Calu3 (cell line): ENCODE measurements at regions of chr14 and their contacts with region 1.

Region 1: DNA sequence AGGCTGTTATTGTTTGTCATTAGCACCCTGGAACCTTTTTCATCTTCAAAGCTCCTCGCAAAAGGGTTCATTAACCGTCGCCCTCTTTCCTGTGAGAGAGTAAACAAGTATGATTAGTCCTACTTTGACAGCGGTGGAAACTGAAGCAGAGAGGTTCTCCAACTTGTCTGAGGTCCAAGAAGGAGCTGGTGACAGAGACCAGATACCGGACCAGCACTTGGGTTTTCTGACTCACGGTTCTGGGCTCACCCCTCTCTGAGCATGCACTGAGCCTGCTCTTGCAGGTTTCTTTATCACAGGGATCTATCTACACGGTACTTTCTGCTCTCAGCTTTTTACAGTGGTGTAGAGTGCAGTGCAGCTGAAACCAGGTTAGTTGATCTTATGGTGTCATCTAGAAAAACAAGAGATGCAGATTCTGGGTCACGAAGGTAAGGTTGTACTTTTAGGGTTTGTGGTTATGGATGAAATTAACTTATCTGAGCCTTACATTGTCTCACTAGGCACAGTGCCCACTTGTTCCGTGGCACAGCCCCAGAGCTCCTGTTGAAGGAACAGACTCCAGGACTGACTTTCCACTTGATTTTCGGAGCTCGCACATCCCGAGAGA is 62.1 kb downstream of the PPP2R5C start:
- DNase-seq: no peak
- H3K4me3 Mint-ChIP-seq: no peak overlapping the region
- H3K27ac Mint-ChIP-seq: no peak overlapping the region
- H3K4me1 Mint-ChIP-seq: peaks cover 12% of the 10 kb centered on the region
- H3K27me3 Mint-ChIP-seq: no peaks in the 10 kb centered on the region
- CTCF ChIP-seq: no peak

Region 2: GRCh38 chr14:101809671-101810514 is 13.7 kb before region 1 on chr14:
- CTCF ChIA-PET with region 1: interaction called, 15 read pairs
- intact Hi-C with region 1: no loop called
- DNase-seq: peak; percentile 87
- H3K4me3 Mint-ChIP-seq: peak overlapping the region; percentile 82
- H3K27ac Mint-ChIP-seq: peak overlapping the region; percentile 98
- H3K4me1 Mint-ChIP-seq: peaks cover 56% of the 10 kb centered on the region
- H3K27me3 Mint-ChIP-seq: no peaks in the 10 kb centered on the region
- CTCF ChIP-seq: no peak